ENCODE measurements at regions of chr5 and their contacts with region 1.

Region 1: DNA sequence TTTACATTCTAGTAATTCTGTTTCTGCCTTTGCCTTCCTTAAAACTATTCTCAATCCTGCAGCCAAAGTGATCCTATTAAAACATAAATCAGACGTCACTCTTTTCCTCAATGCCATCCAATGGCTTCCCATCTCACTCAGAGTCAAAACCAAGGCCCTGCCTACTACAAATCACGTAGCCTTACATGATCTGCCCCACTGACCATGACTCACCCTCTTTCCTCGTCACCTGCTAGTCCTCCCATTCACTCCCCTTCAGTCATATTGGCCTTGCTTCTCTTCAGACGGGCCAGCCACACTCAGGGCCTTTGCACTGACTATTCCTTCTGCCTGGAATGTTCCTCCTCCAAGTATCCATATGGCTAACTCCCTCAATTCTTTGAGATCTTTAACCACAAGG is 39.0 kb upstream of the DMXL1 start:
- DNase-seq: peak; percentile 35
- H3K4me3 Mint-ChIP-seq: no peak overlapping the region
- H3K27ac Mint-ChIP-seq: peak overlapping the region; percentile 54
- H3K4me1 Mint-ChIP-seq: peaks cover 22% of the 10 kb centered on the region
- H3K27me3 Mint-ChIP-seq: no peaks in the 10 kb centered on the region

Region 2: GRCh38 chr5:118808441-118808840 is 223.5 kb before region 1 on chr5:
- CTCF ChIA-PET with region 1: no interaction called
- POLR2A ChIA-PET with region 1: no interaction called
- intact Hi-C with region 1: no loop called
- DNase-seq: no peak
- H3K4me3 Mint-ChIP-seq: no peak overlapping the region
- H3K27ac Mint-ChIP-seq: no peak overlapping the region
- H3K4me1 Mint-ChIP-seq: no peaks in the 10 kb centered on the region
- H3K27me3 Mint-ChIP-seq: no peaks in the 10 kb centered on the region

Region 3: DNA sequence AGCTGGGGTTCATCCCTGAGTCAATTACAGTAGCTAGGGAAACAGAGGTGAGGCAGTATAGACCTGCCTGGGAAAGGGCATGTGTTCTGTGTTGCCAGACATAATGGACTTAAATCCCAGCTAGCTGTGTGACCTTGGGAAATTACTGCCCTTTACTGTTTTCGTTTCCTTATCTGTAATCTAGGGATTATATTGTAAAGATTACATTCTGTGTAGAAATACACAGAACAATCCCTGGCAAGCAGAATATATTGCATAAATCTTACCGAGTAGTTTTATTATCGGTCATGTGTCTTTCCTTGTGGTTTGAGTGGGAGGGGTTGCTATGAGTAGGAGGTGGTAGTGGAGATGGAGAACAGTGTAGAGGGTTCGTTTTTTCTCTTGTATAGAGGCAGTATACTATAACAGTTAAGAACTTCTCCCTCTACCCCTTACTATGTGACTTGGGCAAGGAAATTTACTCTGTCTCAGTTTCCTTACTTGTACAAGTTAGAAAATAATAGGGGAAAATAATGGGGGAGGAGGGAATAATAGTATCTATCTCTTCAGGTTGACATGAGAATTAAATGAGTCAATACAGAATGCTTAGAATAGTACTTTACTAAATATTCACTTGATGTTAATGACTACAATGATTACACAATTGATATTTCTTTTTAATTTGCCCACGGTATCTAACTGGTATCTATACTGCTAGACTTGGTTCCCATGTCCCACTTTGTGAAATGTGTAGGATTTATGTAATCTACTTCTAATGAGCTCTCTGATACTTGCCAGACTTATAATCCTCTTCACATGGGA is 31.9 kb after region 1 on chr5:
- CTCF ChIA-PET with region 1: no interaction called
- POLR2A ChIA-PET with region 1: no interaction called
- intact Hi-C with region 1: loop called (anchors 1 kb)
- DNase-seq: peak; percentile 25
- H3K4me3 Mint-ChIP-seq: no peak overlapping the region
- H3K27ac Mint-ChIP-seq: peak overlapping the region; percentile 20
- H3K4me1 Mint-ChIP-seq: peaks cover 12% of the 10 kb centered on the region
- H3K27me3 Mint-ChIP-seq: no peaks in the 10 kb centered on the region

Region 4: DNA sequence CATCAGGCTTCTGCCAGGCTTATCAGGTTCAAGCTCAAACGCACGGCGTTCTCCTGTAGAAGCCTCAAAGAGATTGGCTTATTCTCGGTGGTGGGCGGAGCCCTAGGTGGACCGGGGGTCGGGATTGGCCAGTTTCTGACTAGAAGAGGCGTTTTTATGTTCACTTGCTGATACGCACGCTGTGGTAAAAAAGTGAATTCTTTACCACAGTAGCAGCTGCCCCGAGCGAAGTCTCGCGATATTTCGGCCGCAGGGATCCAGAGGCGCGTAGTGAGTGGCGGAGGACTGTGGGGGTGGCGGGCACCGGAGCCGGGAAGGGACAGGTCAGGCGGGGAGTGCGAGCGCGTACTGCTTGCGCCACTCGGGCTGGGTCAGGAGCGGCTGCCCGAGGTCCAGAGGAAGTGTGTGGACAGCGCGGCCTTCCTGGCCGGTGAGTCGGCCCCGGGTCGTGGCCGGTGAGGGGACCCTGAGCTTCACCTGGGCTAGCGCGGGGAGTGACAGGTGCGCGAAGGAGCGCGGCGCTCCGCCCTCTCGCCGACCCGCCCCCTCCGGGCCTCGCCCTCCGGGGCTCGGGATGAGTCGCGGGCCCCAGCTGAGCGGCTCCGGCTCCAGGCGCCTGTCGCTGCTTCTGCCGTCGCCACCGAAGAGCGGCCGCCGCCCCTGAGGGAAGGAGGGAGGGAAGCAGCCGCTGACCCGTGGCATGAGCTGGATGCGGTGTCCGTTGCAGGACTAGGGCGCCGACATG is 39.1 kb after region 1 on chr5 and contains the start of gene DMXL1:
- CTCF ChIA-PET with region 1: no interaction called
- POLR2A ChIA-PET with region 1: no interaction called
- intact Hi-C with region 1: loop called (anchors 1 kb)
- DNase-seq: peak; percentile 99
- H3K4me3 Mint-ChIP-seq: peak within 1 kb of the TSS; percentile 85
- H3K27ac Mint-ChIP-seq: peak within 1 kb of the TSS; percentile 96
- H3K4me1 Mint-ChIP-seq: peaks cover 40% of the 10 kb centered on the region
- H3K27me3 Mint-ChIP-seq: peaks cover 2% of the 10 kb centered on the region
- total RNA-seq, gene DMXL1: 24.2 to 26.9 TPM

Region 5: GRCh38 chr5:119079318-119079921 is 47.5 kb after region 1 on chr5:
- CTCF ChIA-PET with region 1: no interaction called
- POLR2A ChIA-PET with region 1: no interaction called
- intact Hi-C with region 1: loop called (anchors 1 kb)
- DNase-seq: peak; percentile 65
- H3K4me3 Mint-ChIP-seq: peak overlapping the region; percentile 23
- H3K27ac Mint-ChIP-seq: peak overlapping the region; percentile 50
- H3K4me1 Mint-ChIP-seq: peaks cover 51% of the 10 kb centered on the region
- H3K27me3 Mint-ChIP-seq: no peaks in the 10 kb centered on the region

Region 6: GRCh38 chr5:119367502-119368237 is 335.8 kb after region 1 on chr5:
- CTCF ChIA-PET with region 1: no interaction called
- POLR2A ChIA-PET with region 1: no interaction called
- intact Hi-C with region 1: loop called (anchors 1 kb)
- DNase-seq: no peak
- H3K4me3 Mint-ChIP-seq: peak overlapping the region; percentile 55
- H3K27ac Mint-ChIP-seq: peak overlapping the region; percentile 90
- H3K4me1 Mint-ChIP-seq: peaks cover 83% of the 10 kb centered on the region
- H3K27me3 Mint-ChIP-seq: no peaks in the 10 kb centered on the region

Measured in activated CD4-positive, alpha-beta memory T cell treated with anti-CD3 and anti-CD28 coated beads for 36 hours (primary cell).